ENCODE measurements at regions of chr12 and their contacts with region 1.

Region 1: GRCh38 chr12:48119078-48119833 is at the start of gene PFKM:
- DNase-seq: peak; percentile 50
- H3K4me3 ChIP-seq: peak within 1 kb of the TSS; percentile 96
- CTCF ChIP-seq: no peak

Region 2: GRCh38 chr12:48021485-48022179 is 97.6 kb before region 1 on chr12:
- CTCF ChIA-PET with region 1: no interaction called
- POLR2A ChIA-PET with region 1: no interaction called
- DNase-seq: no peak
- H3K4me3 ChIP-seq: no peak overlapping the region
- CTCF ChIP-seq: no peak

Region 3: DNA sequence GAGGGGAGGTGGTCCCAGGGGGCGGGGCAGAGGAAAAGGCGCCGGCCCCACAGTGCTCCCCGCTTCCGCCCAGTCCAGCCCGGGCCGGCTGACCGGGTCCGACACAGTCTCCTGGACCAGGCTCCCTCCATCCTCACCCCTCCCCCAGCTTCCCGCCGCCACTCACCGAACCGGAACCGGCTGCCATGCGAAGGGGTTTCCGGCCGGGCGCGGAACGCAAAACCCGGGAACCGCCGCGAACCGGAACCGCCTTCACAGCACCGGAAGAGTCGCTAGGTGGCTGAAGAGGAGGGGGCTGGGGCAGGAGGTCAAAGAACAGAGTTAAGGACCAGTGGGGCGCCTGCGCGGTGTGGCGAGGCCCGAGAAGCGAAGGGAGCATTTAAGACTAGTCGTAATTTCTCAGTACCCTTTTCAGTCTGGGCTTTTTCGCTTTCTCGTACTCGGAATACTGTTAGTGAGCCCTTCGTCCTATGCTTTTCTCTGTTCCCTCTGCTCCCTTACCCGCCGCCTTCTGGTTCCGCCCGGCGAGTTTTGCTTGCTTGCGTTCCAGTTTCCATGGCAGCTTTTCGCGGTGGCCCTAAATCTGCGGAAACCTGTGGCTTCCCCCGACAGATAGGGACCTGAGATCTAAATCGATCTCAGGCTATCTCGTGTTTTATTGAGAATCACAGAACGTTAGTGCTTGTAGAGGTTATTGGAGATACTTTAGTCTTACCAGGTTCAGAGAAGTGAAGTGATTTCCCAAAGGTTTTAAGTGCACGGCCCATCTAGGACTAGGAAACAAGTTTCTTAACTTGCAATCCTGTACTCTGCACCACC is 13.2 kb before region 1 on chr12 and contains the start of gene SENP1:
- CTCF ChIA-PET with region 1: interaction called, 13 read pairs
- POLR2A ChIA-PET with region 1: interaction called, 11 read pairs
- DNase-seq: no peak
- H3K4me3 ChIP-seq: peak within 1 kb of the TSS; percentile 86
- CTCF ChIP-seq: no peak